ENCODE measurements at regions of chr5 and their contacts with region 1.

Region 1: DNA sequence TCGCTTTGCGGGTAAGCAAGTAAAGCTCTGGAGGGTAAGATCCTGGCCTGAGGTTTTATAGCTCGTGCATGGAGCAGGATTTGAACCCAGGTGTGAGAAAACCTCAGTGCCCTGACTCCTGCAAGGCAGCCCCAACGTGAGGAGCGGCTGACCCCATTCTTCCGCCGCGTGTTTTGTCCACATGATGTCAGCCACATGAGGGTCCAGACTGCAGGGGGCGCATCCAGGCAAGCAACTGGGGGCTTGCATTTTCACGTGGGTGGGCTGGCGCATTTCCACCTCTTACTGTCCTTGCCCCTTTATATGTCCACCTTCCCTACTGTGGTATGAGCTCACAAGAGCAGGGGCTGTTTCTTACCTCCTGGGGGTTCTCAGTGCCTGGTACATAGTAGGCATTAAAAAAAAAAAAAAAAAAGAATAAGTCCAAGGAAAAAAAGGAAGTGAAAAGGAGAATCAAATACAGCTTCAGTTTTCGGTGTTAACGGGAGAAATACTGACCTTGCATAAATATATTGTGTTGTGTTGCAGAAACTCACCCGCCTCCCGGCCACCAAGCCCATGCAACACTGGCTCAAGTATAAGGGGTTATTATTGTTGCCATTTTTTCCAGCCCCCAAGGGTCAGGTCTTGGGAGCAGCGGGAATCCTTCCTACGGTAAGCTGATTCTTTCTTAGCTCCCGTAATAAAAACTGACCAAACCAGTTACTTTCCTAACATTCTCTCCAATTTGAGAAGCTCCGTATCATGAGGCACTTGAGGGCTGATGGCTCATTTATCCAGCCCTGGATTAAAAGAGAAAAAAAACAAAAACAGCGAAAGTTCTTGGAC is 15.0 kb downstream of the TLX3 start:
- DNase-seq: no peak
- H3K4me3 ChIP-seq: no peak overlapping the region
- H3K27ac ChIP-seq: no peak overlapping the region
- H3K4me1 ChIP-seq: no peaks in the 10 kb centered on the region
- CTCF ChIP-seq: 0 out of 2 replicates have a peak, but pooled peaks have one; percentile 9

Region 2: GRCh38 chr5:170843870-170844269 is 480.1 kb before region 1 on chr5:
- CTCF ChIA-PET with region 1: no interaction called
- POLR2A ChIA-PET with region 1: no interaction called
- intact Hi-C with region 1: no loop called
- DNase-seq: no peak
- H3K4me3 ChIP-seq: no peak overlapping the region
- H3K27ac ChIP-seq: no peak overlapping the region
- H3K4me1 ChIP-seq: no peaks in the 10 kb centered on the region
- CTCF ChIP-seq: no peak

Region 3: GRCh38 chr5:171092194-171092593 is 231.8 kb before region 1 on chr5:
- CTCF ChIA-PET with region 1: no interaction called
- POLR2A ChIA-PET with region 1: no interaction called
- intact Hi-C with region 1: no loop called
- DNase-seq: no peak
- H3K4me3 ChIP-seq: no peak overlapping the region
- H3K27ac ChIP-seq: no peak overlapping the region
- H3K4me1 ChIP-seq: no peaks in the 10 kb centered on the region
- CTCF ChIP-seq: no peak

Region 4: DNA sequence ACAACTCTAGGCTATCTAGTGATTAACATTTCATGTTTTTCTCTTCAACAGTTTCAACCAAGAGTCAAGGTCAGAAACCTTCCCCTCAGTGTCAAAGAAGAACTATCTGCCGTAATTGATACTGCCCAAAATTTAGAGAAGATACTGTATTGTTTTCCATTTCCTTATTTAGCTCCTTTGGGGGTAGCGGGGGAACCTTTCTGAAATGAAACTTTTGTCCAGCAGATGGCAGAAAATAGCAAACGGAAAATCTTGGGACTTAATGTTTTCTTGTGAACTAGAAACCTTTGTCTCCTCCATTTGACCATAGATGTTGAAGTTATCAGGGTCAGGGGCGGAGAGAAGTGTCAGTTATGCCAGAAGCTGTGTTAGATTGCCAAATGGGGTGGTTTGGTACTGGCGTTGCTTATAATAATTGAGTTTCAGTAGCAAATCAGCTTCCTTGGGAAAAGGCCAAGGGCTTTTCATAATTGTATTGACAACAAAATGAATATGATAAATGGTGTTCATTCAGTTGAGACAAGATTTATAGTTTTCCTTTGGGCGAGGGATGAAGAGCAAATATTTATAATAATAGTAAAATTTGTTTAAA is 116.7 kb before region 1 on chr5:
- CTCF ChIA-PET with region 1: no interaction called
- POLR2A ChIA-PET with region 1: no interaction called
- intact Hi-C with region 1: loop called (anchors 10 kb)
- DNase-seq: peak; percentile 29
- H3K4me3 ChIP-seq: no peak overlapping the region
- H3K27ac ChIP-seq: no peak overlapping the region
- H3K4me1 ChIP-seq: no peaks in the 10 kb centered on the region
- CTCF ChIP-seq: peak; percentile 77

Region 5: DNA sequence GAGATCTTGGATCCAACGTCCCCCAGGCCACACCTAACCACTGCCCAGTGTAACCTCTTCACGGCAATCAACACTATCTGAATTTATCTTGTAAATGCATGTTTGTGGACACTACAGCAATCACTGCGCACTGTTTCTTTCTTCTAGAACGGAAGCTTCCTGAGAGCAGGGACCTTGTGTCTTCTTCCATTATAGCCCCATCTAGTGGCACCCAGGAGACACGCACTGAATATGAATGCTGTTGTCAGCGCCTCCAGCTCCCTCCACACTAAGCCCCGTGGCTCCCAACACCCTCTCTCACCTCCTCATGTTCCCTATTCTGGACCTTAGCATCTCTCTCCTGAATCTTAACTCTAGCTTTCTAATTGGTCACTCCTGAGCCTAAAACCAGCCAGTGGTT is 534.3 kb after region 1 on chr5:
- CTCF ChIA-PET with region 1: no interaction called
- POLR2A ChIA-PET with region 1: no interaction called
- intact Hi-C with region 1: no loop called
- DNase-seq: peak; percentile 22
- H3K4me3 ChIP-seq: no peak overlapping the region
- H3K27ac ChIP-seq: no peak overlapping the region
- H3K4me1 ChIP-seq: no peaks in the 10 kb centered on the region
- CTCF ChIP-seq: peak; percentile 72

Measured in OCI-LY7 (cell line).